CD8-positive, alpha-beta T cell (primary cell): ENCODE measurements at regions of chr11 and their contacts with region 1.

Region 1: DNA sequence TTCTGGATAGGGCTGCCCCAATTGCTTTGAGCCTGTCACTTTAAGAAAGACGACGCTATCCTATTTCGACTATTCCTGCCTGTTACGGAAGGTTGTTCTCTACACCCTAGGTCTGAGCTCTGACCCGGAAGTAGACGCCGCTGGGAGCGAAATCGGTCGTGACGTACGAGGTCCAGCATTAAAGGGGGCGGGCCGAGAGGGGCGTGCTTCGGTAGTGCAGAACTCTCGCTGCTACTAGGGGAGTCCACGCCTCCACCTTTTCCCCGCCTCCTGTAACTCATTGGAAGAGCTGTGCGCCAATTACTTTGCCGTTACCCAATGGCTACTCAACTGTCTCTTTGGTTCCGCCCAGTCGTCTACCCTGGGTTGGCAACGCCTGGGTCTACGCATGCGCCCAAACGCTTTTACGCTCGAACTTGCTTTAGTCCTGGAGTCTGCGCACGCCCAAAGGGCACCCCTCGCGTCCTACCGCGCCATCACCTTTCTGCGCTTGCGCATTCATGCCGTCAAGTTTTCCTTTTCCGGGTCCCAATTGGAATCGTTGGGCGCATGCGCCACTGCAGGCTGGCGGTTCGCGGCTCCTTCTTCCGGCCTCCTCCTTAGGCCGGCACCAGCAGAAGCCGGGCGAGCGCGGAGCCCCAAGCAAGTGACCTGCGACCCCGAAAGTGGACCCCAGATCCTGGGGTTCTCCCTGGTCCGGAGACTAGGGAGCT is at the start of gene PCNX3:
- DNase-seq: peak; percentile 99 to 100 (median 100)
- ATAC-seq: peak; percentile 88
- H3K4me3 ChIP-seq: peak within 1 kb of the TSS; percentile 78 to 89
- H3K4me3 Mint-ChIP-seq: peak within 1 kb of the TSS; percentile 96
- H3K27ac ChIP-seq: peak within 1 kb of the TSS; percentile 92 to 97
- H3K27ac Mint-ChIP-seq: peak within 1 kb of the TSS; percentile 96
- H3K4me1 ChIP-seq: peaks cover 46% of the 10 kb centered on the region
- H3K4me1 Mint-ChIP-seq: peaks cover 45% of the 10 kb centered on the region
- H3K27me3 ChIP-seq: no peaks in the 10 kb centered on the region
- H3K27me3 Mint-ChIP-seq: no peaks in the 10 kb centered on the region
- CTCF ChIP-seq: no peak
- total RNA-seq, gene PCNX3: 52.7 to 56.4 TPM

Region 2: DNA sequence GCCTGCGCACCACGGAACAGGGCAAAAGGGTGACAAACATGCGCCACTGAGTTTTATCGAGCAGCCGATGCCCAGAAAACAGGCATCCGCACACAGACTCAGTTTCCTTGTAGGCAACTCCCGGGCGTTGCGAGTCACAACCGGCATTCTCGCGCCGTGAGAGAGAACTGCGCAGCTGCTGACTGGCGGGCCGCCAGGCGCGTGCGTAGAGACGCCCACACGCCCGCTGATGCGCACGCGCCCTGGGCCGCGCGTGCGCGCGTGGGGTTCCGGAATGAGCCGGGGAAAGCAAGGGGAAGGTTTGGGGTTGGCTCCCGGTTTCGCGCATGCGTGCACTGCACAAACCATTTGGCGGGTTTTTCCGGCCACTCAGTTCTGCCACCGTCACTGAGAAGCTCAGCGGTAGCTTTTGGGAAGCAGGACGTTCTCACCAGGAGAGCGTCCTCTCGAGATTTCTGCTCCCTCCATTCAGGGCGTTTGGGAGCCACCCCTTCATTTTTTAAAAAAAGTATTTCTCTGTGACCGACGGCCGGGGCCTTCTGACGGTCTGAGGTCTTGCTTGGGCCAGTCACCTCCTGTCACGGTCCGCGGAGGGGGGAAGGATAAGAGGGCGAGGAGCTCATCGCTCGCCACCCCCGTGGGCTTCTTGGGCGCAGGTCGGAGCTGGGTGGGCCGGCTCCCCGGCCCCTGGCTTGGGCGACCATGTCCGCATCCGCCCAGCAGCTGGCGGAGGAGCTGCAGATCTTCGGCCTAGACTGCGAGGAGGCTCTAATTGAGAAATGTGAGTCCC is 353.6 kb before region 1 on chr11 and contains the start of gene POLA2:
- CTCF ChIA-PET with region 1: no interaction called
- POLR2A ChIA-PET with region 1: no interaction called
- intact Hi-C with region 1: loop called in 1 of 2 experiments (anchors 1 kb)
- DNase-seq: peak; percentile 90 to 99 (median 95)
- ATAC-seq: peak; percentile 95
- H3K4me3 ChIP-seq: peak within 1 kb of the TSS; percentile 79 to 85
- H3K4me3 Mint-ChIP-seq: peak within 1 kb of the TSS; percentile 93
- H3K27ac ChIP-seq: peak within 1 kb of the TSS; percentile 85 to 93
- H3K27ac Mint-ChIP-seq: peak within 1 kb of the TSS; percentile 95
- H3K4me1 ChIP-seq: peaks cover 14% of the 10 kb centered on the region
- H3K4me1 Mint-ChIP-seq: peaks cover 43% of the 10 kb centered on the region
- H3K27me3 ChIP-seq: no peaks in the 10 kb centered on the region
- H3K27me3 Mint-ChIP-seq: no peaks in the 10 kb centered on the region
- CTCF ChIP-seq: no peak
- total RNA-seq, gene POLA2: 8.5 to 9.3 TPM

Region 3: DNA sequence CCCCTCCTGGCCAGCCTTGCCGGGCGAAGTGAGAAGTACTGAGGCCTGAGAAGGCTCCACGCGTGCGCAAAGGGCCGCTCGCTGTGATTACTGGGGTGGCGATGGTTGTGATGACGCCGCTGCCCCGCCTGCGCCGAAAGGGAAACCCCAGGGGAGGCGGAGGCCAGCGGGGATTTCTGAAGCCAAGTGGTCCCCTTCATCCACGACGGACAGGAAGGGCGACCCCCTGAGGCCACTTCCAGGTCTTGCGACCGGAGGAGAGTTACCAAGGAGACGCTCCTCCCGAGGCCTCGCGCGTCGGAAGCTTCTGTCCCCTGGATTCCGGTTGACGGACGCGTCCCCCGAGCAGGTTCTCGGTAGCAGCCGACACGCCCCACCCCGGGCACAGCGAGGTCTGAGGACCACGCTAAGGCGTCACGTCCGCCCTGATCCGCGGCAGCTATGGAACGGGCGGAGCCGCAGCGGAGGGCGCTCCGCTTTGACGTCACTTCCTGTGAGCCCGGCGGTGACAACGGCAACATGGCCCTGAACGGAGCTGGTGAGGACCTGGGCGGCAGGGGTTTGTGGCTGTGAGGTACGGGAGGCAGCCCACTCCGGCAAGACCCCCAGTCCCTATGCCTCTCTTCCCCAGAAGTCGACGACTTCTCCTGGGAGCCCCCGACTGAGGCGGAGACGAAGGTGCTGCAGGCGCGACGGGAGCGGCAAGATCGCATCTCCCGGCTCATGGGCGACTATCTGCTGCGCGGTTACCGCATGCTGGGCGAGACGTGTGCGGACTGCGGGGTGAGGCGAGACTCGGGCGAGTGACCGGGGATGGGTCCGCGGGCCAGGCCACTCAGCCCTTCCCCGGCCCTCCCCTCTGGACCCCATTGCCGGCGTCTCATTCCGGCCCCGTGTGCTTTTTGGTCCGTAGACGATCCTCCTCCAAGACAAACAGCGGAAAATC is 45.1 kb before region 1 on chr11 and contains the start of gene ZNRD2:
- CTCF ChIA-PET with region 1: interaction called, 5 read pairs
- POLR2A ChIA-PET with region 1: interaction called, 38 read pairs
- intact Hi-C with region 1: loop called (anchors 1 kb)
- DNase-seq: peak; percentile 96 to 99 (median 98)
- ATAC-seq: peak; percentile 69
- H3K4me3 ChIP-seq: peak within 1 kb of the TSS; percentile 92 to 94
- H3K4me3 Mint-ChIP-seq: peak within 1 kb of the TSS; percentile 99
- H3K27ac ChIP-seq: peak within 1 kb of the TSS; percentile 94 to 99
- H3K27ac Mint-ChIP-seq: peak within 1 kb of the TSS; percentile 99
- H3K4me1 ChIP-seq: peaks cover 76% of the 10 kb centered on the region
- H3K4me1 Mint-ChIP-seq: peaks cover 76% of the 10 kb centered on the region
- H3K27me3 ChIP-seq: no peaks in the 10 kb centered on the region
- H3K27me3 Mint-ChIP-seq: no peaks in the 10 kb centered on the region
- CTCF ChIP-seq: no peak
- total RNA-seq, gene ZNRD2: 35.6 to 41.4 TPM

Region 4: DNA sequence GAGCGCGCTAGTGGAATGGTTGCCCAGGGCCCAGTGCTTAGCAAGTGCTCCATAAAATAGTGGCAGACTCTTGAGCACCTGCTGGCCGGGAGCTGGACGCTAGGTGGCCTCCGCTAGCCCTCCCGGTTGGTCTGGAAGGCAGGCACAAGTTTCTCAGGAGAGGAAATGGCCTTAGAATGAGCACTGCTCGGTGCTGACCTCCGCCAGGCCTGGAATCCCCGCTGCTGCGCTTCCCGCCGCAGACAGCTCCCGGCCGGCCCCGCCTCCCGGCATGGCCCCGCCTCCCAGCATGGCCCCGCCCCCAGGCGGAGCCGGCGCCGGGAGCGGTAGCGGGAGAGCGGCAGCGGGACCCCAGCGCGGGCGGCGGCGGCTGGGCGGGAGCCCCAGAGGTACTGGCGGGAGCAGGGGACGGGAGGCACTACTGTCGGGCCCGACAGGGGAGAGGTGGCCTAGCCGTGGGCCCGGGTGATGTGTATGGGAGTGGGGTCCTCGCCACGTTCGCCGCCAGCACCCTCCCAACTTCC is 22.5 kb after region 1 on chr11 and contains the start of gene SIPA1:
- CTCF ChIA-PET with region 1: interaction called, 5 read pairs
- POLR2A ChIA-PET with region 1: interaction called, 28 read pairs
- intact Hi-C with region 1: loop called (anchors 1 kb)
- DNase-seq: peak; percentile 46 to 89 (median 70)
- ATAC-seq: peak; percentile 43
- H3K4me3 ChIP-seq: peak within 1 kb of the TSS; percentile 99
- H3K4me3 Mint-ChIP-seq: peak within 1 kb of the TSS; percentile 94
- H3K27ac ChIP-seq: peak within 1 kb of the TSS; percentile 97 to 98
- H3K27ac Mint-ChIP-seq: peak within 1 kb of the TSS; percentile 98
- H3K4me1 ChIP-seq: peaks cover 62% of the 10 kb centered on the region
- H3K4me1 Mint-ChIP-seq: peaks cover 44% of the 10 kb centered on the region
- H3K27me3 ChIP-seq: no peaks in the 10 kb centered on the region
- H3K27me3 Mint-ChIP-seq: no peaks in the 10 kb centered on the region
- CTCF ChIP-seq: no peak
- total RNA-seq, gene SIPA1: 397 to 405 TPM

Region 5: DNA sequence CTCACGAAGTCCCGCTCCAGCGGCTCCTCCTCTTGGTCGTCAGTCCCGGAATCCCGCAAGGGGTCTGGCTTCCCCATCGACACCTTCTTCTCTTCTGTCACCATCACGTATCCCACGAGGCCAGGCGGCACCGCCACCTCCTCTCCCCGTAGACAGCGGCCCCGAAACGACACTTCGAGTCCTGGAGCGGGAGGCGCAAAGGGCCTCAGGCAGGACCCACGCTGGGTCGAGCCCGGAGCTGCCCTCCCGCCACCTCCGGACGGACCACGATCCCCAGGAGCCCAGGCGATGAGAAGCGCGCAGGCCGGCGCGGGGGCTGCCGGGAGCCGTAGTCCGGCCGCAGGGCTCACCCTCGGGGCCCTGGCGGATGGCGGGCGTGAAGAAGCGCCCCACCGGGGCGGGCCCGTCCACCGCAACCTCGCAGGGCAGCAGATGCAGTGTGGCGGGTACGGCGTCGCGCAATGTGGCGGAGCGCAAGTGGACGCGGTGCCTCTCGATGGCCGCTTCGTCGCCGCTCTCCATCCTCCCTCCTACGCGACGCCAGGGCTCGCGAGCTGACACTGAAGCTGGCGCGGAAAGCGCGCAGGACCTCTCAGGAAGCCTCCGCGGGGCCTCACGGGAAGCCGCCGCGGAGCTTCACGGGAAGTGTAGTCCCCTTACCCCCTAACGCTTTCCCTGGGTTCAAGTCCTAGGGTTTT is 105.0 kb after region 1 on chr11 and contains the start of gene RNASEH2C:
- CTCF ChIA-PET with region 1: no interaction called
- POLR2A ChIA-PET with region 1: interaction called, 10 read pairs
- intact Hi-C with region 1: loop called (anchors 1 kb)
- DNase-seq: peak; percentile 53 to 89 (median 73)
- ATAC-seq: peak; percentile 93
- H3K4me3 ChIP-seq: peak within 1 kb of the TSS; percentile 84 to 92
- H3K4me3 Mint-ChIP-seq: peak within 1 kb of the TSS; percentile 90
- H3K27ac ChIP-seq: peak within 1 kb of the TSS; percentile 70 to 73
- H3K27ac Mint-ChIP-seq: peak within 1 kb of the TSS; percentile 88
- H3K4me1 ChIP-seq: peaks cover 22% of the 10 kb centered on the region
- H3K4me1 Mint-ChIP-seq: peaks cover 33% of the 10 kb centered on the region
- H3K27me3 ChIP-seq: no peaks in the 10 kb centered on the region
- H3K27me3 Mint-ChIP-seq: no peaks in the 10 kb centered on the region
- CTCF ChIP-seq: no peak
- total RNA-seq, gene RNASEH2C: 27.7 to 32.0 TPM

Region 6: DNA sequence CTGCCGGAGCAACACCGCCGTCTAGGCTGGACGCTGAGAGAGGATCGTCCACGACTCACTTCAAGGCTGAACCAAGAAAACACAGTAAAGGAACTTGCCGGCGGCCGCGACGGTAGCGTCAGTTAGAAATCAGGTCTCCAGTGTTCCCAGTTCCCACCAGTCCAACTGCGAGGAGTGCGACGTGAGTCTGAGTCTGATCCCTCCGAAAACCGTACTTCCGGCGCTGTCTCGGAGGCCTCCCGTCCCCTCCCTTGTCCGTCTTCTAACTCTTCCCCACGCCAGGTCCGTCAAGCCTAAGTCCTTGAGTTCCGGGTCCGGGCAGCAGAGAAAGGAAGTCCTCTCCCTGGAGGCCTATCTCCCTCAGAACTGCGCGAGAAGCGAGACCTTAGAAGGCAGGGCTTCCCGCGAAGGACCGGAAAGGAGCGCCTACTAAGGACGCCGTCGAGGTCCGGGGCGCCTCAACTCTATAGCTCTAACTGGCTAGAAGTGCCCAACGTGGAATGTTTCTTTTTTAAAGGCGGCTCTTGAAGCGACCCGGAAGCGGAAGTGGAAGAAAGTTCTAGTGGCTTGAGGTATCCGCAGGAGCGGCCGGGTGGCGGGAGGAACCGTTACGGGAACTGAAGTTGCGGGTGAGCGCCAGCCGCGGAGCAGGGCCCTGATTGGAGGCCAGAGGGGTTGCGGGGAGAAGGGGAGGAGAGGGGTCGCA is 386.7 kb after region 1 on chr11 and contains the starts of genes BANF1 and EIF1AD:
- CTCF ChIA-PET with region 1: no interaction called
- POLR2A ChIA-PET with region 1: no interaction called
- intact Hi-C with region 1: loop called (anchors 1 kb)
- DNase-seq: peak; percentile 85 to 98 (median 92)
- ATAC-seq: peak; percentile 83
- H3K4me3 ChIP-seq: peak within 1 kb of the TSS; percentile 80 to 98
- H3K4me3 Mint-ChIP-seq: peak within 1 kb of the TSS; percentile 99
- H3K27ac ChIP-seq: peak within 1 kb of the TSS; percentile 93 to 95
- H3K27ac Mint-ChIP-seq: peak within 1 kb of the TSS; percentile 98
- H3K4me1 ChIP-seq: peaks cover 21% of the 10 kb centered on the region
- H3K4me1 Mint-ChIP-seq: peaks cover 43% of the 10 kb centered on the region
- H3K27me3 ChIP-seq: no peaks in the 10 kb centered on the region
- H3K27me3 Mint-ChIP-seq: no peaks in the 10 kb centered on the region
- CTCF ChIP-seq: no peak
- total RNA-seq, gene BANF1: 31.6 to 34.0 TPM
- total RNA-seq, gene EIF1AD: 119 to 126 TPM

Region 7: DNA sequence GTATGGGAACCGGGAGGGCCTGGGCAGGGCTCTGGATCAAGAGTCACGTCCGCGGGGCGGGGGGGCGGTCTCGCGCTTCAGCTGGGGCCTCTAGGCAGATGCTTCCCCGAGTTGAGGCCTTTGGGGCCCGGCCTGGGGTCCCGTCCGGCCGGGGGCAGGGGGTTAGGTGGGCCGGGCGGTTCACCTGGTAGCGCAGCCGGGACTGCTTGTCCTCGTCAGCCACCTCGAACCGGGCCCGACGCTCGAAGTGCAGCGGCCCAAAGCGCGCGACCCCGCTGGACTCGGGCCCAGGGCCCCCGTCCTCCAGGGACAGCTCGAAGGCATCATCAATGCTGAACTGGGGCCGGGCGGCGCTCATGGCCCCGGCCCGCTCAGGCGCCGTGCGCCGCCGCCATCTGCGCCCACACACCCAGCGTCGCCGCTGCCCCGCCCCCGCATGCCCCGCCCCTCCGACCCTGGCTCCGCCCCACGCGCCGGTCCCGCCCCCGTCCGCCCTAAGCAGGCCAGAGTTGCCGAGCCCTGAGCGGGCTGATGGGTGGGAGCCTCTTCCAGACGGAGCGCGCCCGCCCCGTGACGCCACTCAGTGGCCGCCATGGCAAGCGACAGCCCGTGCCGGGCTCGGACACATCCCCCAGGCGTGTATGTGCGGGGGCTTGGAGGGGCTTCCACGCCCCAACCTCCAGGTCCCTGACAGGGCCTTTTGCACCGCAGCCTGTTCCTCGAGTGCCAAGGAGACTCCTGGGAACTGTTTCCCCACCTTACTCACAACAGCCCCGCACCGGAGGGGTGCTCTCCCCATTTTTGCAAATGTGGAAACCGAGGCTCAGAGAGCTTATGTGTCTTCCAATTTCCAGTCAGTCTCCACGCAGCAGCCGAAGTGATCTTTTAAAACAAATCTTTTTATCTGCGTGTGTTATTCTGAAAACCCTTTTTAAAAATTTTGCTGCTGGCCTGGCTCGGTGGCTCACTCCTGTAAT is 1853.7 kb after region 1 on chr11 and contains the start of gene TMEM134:
- CTCF ChIA-PET with region 1: no interaction called
- POLR2A ChIA-PET with region 1: no interaction called
- intact Hi-C with region 1: loop called in 1 of 2 experiments (anchors 2 kb)
- DNase-seq: peak; percentile 86 to 97 (median 91)
- ATAC-seq: peak; percentile 81
- H3K4me3 ChIP-seq: peak within 1 kb of the TSS; percentile 80 to 89
- H3K4me3 Mint-ChIP-seq: peak within 1 kb of the TSS; percentile 89
- H3K27ac ChIP-seq: peak within 1 kb of the TSS; percentile 78 to 82
- H3K27ac Mint-ChIP-seq: peak within 1 kb of the TSS; percentile 93
- H3K4me1 ChIP-seq: peaks cover 39% of the 10 kb centered on the region
- H3K4me1 Mint-ChIP-seq: peaks cover 37% of the 10 kb centered on the region
- H3K27me3 ChIP-seq: no peaks in the 10 kb centered on the region
- H3K27me3 Mint-ChIP-seq: no peaks in the 10 kb centered on the region
- CTCF ChIP-seq: peak; percentile 43
- total RNA-seq, gene TMEM134: 41.2 to 48.5 TPM